K562 (cell line): ENCODE measurements at regions of chr22 and their contacts with region 1.

Region 1: GRCh38 chr22:22666307-22667091 is 22.1 kb downstream of the GGTLC2 start:
- DNase-seq: peak; percentile 82 to 90 (median 84)
- ATAC-seq: peak; percentile 93
- H3K4me3 ChIP-seq: no peak overlapping the region
- H3K27ac ChIP-seq: no peak overlapping the region
- H3K4me1 ChIP-seq: no peaks in the 10 kb centered on the region
- H3K27me3 ChIP-seq: peaks cover 2 to 35% of the 10 kb centered on the region in 2 experiments; a peak in 4 of 5 replicates
- CTCF ChIP-seq: no peak
- EP300 ChIP-seq: no peak
- POLR2A ChIP-seq: no peak
- RAD21 ChIP-seq: no peak

Region 2: DNA sequence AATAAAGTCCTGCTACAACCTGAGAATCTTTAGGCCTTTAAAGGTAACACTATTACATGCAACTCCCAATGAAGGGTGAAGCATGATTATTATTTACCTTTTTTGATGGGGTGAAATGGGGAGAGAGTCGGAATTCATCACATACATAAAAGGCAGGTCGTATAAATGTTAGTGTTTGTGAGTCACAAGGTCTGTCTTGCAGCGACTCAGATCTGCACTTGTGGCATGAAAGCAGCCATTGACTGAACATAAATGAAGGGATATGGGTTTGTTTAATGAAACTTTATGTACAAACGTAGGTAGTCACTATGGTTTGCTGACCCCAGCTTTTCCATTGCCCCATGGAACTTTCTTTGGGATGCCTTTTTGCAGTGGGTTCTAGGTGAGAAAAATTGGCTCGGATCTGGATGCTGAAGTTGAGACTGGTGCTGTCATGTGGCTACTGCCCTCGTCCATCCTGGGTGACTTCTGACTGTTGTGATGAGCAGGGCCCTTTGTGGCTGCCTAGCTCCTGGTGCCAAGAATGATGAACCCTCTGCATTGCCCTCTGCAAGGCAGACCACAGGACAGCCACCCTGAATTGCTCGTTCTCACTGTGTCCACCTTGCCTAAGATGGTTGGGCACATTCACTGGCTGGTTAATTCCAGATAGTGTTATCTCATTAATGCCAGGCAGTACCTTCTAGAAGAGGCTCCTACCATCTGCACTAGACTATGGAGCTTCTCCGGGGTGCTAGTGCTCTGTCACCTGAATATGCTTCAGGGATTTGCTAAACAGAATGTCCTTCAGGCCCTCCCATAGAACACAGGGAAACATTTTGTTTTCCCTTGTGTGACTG is 10.8 kb before region 1 on chr22:
- CTCF ChIA-PET with region 1: interaction called, 3 read pairs
- POLR2A ChIA-PET with region 1: interaction called, 25 read pairs
- in situ Hi-C with region 1: no loop called
- intact Hi-C with region 1: no loop called
- DNase-seq: no peak
- ATAC-seq: no peak; the same call in 1 of the 3 replicates
- H3K4me3 ChIP-seq: no peak overlapping the region
- H3K27ac ChIP-seq: no peak overlapping the region
- H3K4me1 ChIP-seq: peaks cover 0 to 21% of the 10 kb centered on the region in 2 experiments; a peak in 3 of 5 replicates
- H3K27me3 ChIP-seq: peaks cover 28 to 48% of the 10 kb centered on the region in 2 experiments
- CTCF ChIP-seq: no peak
- EP300 ChIP-seq: no peak
- POLR2A ChIP-seq: no peak
- RAD21 ChIP-seq: no peak

Region 3: GRCh38 chr22:22681221-22681739 is 14.8 kb after region 1 on chr22:
- CTCF ChIA-PET with region 1: interaction called, 37 read pairs
- POLR2A ChIA-PET with region 1: interaction called, 39 read pairs
- in situ Hi-C with region 1: no loop called
- intact Hi-C with region 1: no loop called
- DNase-seq: peak in 2 of 4 experiments; percentile 59 to 74
- ATAC-seq: peak; percentile 2; the same call in 1 of the 3 replicates
- H3K4me3 ChIP-seq: no peak overlapping the region
- H3K27ac ChIP-seq: no peak overlapping the region
- H3K4me1 ChIP-seq: peaks cover 0 to 6% of the 10 kb centered on the region in 2 experiments; a peak in 3 of 5 replicates
- H3K27me3 ChIP-seq: peaks cover 6 to 15% of the 10 kb centered on the region in 2 experiments; a peak in 3 of 5 replicates
- CTCF ChIP-seq: no peak
- EP300 ChIP-seq: no peak
- POLR2A ChIP-seq: no peak
- RAD21 ChIP-seq: no peak

Region 4: GRCh38 chr22:22692707-22693530 is 26.4 kb after region 1 on chr22:
- CTCF ChIA-PET with region 1: interaction called, 37 read pairs
- POLR2A ChIA-PET with region 1: interaction called, 23 read pairs
- in situ Hi-C with region 1: no loop called
- intact Hi-C with region 1: no loop called
- DNase-seq: peak; percentile 96 to 100 (median 99)
- ATAC-seq: peak; percentile 94
- H3K4me3 ChIP-seq: no peak overlapping the region
- H3K27ac ChIP-seq: no peak overlapping the region
- H3K4me1 ChIP-seq: no peaks in the 10 kb centered on the region
- H3K27me3 ChIP-seq: peaks cover 0 to 27% of the 10 kb centered on the region in 2 experiments; a peak in 2 of 5 replicates
- CTCF ChIP-seq: no peak
- EP300 ChIP-seq: no peak
- POLR2A ChIP-seq: no peak
- RAD21 ChIP-seq: no peak

Region 5: DNA sequence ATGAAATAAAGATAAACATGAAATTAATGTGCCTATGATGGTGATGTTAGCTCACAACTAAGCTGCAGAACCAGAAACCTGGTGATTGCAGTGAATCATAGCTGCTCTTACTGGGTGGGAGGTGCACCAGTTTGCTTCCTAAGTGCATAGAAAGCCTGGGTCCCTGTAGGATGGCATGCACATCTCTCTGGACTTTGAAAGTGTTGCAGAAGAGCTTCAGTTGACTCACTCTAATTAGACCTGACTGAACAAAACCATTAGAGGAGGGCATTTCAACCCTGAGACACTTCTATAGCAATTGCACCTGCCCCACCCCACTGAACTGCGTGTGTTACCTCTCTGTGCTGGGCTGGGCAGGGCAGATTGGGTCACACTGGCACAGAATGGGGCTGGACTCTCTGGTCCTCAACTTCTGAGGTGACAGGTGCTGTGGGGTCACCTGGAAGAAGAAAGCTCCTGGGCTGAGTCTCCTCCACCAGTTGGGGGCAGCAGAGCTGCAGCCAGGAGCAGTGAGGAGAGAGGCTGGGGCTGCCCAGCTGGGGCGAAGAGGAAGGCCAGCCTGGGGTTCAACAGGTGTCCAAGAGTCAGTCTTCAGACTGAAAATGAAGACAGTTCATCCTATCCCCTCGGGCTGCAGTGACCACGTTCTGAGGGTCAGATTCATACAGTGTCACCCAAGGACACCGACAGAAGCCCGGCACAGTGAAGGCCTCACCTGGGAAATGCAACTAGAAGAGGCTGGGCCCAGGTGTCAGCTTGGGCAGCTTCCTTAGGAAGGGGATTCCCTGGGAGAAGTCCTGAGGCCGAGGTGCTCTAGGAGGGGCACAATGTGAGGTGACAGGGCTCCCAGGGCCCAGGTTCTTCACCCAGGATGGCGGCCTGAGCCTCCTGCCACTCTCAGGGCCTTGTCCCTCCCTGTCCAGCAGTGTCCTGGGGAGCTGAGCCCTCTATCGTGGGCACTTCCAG is 36.0 kb after region 1 on chr22:
- CTCF ChIA-PET with region 1: interaction called, 3 read pairs
- POLR2A ChIA-PET with region 1: interaction called, 10 read pairs
- in situ Hi-C with region 1: no loop called
- intact Hi-C with region 1: no loop called
- DNase-seq: peak in 1 of 4 experiments; percentile 83
- ATAC-seq: peak; percentile 86
- H3K4me3 ChIP-seq: no peak overlapping the region
- H3K27ac ChIP-seq: no peak overlapping the region
- H3K4me1 ChIP-seq: no peaks in the 10 kb centered on the region
- H3K27me3 ChIP-seq: peaks cover 0 to 36% of the 10 kb centered on the region in 2 experiments; a peak in 2 of 5 replicates
- CTCF ChIP-seq: peak in 1 of 3 experiments; percentile 93; a peak in 2 of 6 replicates
- EP300 ChIP-seq: no peak
- POLR2A ChIP-seq: no peak
- RAD21 ChIP-seq: peak in 1 of 2 experiments; percentile 91; a peak in 2 of 4 replicates

Region 6: DNA sequence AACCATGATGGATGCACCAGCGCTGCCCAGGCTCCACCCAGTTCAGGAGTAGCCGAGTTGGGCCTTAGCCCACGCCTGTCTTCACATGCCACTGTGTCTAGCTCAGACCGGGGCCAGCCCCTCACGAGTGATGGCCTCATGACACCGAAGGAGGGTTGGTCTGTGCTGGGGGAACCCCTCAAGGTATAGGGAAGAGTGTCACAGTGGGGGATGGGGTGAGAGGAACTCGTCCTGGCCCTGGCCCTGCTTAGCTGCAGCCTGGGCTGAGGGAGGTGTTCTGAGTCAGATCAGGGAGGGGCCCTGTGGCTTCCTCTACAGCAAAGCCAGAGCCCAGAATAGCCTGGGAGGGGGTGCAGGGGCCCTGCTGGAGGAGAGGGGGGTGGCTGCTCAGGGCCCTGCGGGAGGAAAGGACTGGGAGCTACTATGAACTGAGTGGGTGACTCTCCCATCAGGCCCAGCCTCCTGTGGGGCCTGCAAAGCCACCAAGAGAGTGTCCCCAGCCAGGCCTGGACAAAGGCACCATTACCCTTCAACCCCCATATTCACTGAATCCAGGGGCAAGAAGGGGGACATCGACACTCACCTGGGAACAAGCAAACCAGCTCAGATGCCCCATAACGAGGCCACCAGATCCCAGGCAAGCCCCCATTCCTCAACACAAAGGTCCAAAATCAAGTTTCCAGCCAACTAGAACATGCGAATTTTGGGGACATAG is 262.3 kb after region 1 on chr22:
- CTCF ChIA-PET with region 1: no interaction called
- POLR2A ChIA-PET with region 1: no interaction called
- in situ Hi-C with region 1: no loop called
- intact Hi-C with region 1: no loop called
- DNase-seq: peak in 3 of 4 experiments; percentile 58 to 89 (median 67)
- ATAC-seq: peak; percentile 61
- H3K4me3 ChIP-seq: no peak overlapping the region
- H3K27ac ChIP-seq: no peak overlapping the region; the same call in 2 of the 3 replicates
- H3K4me1 ChIP-seq: peaks cover 16 to 18% of the 10 kb centered on the region in 2 experiments
- H3K27me3 ChIP-seq: peaks cover 8 to 48% of the 10 kb centered on the region in 2 experiments; a peak in 3 of 5 replicates
- CTCF ChIP-seq: peak in 2 of 3 experiments; percentile 2 to 13; a peak in 2 of 6 replicates
- EP300 ChIP-seq: no peak; the same call in 1 of the 2 replicates
- POLR2A ChIP-seq: no peak
- RAD21 ChIP-seq: 0 out of 4 replicates have a peak, but pooled peaks of 1 of the 2 experiments have one; percentile 3